PC-3 (cell line): ENCODE measurements at regions of chr17 and their contacts with region 1.

Region 1: DNA sequence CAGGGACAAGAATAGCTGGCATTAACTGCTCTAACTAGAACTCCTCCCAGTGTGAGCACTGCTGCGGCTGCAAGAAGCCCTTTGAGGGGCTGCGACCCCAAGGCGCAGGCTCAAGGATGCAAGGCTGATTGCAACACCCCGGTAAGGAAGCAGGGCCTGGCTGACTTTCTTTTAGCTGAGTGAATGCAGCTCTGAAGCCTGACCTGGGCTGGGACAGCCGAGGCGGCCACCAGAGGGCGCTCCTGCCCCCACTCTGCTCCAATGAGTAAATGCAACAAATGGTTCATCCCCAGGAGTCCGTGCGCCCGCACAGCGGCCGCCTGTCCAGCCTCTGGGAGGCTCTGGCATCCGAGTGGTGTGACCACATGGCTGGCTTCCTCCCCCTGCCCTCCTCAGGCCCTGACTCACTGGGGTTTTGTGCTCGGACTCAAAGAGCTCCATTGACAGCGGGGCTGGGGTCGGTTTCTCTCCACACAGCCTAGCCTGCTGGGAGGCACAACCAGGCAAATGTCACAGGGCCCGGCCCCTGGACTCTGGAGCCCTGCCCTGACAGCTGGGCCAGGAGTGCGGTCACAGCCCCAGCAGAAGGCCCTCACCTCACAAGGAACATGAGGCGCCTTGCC is at the start of gene SMIM5:
- DNase-seq: peak; percentile 92
- ATAC-seq: peak; percentile 85
- H3K4me3 ChIP-seq: no peak within 1 kb of the TSS
- H3K27ac ChIP-seq: peak within 1 kb of the TSS; percentile 89
- H3K4me1 ChIP-seq: peaks cover 16% of the 10 kb centered on the region
- H3K27me3 ChIP-seq: no peaks in the 10 kb centered on the region
- CTCF ChIP-seq: peak; percentile 98
- total RNA-seq, gene SMIM5: 2.3 and 4.3 TPM in 2 replicates

Region 2: GRCh38 chr17:75487351-75488070 is 145.5 kb before region 1 on chr17:
- CTCF ChIA-PET with region 1: no interaction called
- POLR2A ChIA-PET with region 1: no interaction called
- intact Hi-C with region 1: no loop called
- DNase-seq: no peak
- ATAC-seq: no peak
- H3K4me3 ChIP-seq: no peak overlapping the region
- H3K27ac ChIP-seq: no peak overlapping the region
- H3K4me1 ChIP-seq: no peaks in the 10 kb centered on the region
- H3K27me3 ChIP-seq: no peaks in the 10 kb centered on the region
- CTCF ChIP-seq: no peak; the same call in 1 of the 2 replicates

Region 3: GRCh38 chr17:75589012-75589918 is 43.7 kb before region 1 on chr17:
- CTCF ChIA-PET with region 1: interaction called, 5 read pairs
- POLR2A ChIA-PET with region 1: interaction called, 5 read pairs
- intact Hi-C with region 1: loop called (anchors 1 kb)
- DNase-seq: peak; percentile 94
- ATAC-seq: peak; percentile 94
- H3K4me3 ChIP-seq: peak overlapping the region; percentile 65
- H3K27ac ChIP-seq: no peak overlapping the region
- H3K4me1 ChIP-seq: peaks cover 10% of the 10 kb centered on the region
- H3K27me3 ChIP-seq: no peaks in the 10 kb centered on the region
- CTCF ChIP-seq: peak; percentile 69

Region 4: GRCh38 chr17:75645889-75646637 is 13.1 kb after region 1 on chr17:
- CTCF ChIA-PET with region 1: interaction called, 83 read pairs
- POLR2A ChIA-PET with region 1: interaction called, 6 read pairs
- intact Hi-C with region 1: no loop called
- DNase-seq: peak; percentile 95
- ATAC-seq: peak; percentile 89
- H3K4me3 ChIP-seq: peak overlapping the region; percentile 6; the same call in 1 of the 2 replicates
- H3K27ac ChIP-seq: peak overlapping the region; percentile 94
- H3K4me1 ChIP-seq: peaks cover 45% of the 10 kb centered on the region
- H3K27me3 ChIP-seq: no peaks in the 10 kb centered on the region
- CTCF ChIP-seq: no peak

Region 5: DNA sequence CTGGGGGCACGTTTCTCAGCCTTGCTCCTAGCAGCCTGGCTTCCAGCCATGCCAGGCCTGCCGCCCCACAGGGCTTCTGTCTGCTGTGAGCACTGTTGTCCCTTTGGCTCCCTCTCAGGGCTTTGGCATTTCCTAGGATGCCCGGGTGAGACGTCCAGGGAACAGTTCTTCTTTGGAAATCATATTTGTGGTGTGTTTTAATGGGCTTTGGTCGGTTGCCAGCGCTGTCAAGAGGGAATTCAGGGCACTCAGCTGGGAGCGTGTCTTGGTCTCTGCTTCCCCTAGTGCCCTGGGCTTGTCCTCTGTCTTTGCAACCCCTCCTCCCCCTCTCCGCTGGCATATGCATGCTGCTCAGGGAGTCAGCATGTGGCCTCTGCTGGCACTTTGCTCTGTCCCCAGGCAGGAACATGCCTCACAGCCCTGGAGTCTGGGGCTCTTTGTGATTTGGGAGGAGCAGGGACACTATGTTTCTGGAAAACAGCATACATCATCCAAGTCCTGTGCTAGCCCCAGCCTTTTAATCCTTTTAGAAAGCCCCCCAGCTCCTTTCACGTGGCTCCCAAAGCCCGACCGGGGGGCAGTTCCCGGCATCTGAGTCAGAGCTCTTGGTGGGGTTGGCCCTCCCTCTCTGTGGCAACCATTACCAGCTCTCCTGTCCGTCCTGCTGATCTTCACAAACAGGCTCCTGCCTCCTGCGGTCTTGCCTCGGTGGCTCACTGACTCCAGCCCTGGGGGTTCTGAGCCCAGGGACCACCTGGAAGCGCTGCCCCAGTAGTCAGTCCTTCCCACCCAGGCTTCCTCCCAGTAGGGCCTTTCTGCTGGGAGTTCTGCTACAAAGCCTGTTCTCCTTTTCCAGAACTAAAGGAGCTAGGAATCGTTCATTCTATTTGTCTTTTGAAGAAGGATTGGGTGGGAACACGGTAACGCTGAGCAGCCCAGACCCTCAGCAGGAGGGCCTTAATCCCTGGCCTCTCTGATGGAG is 60.8 kb after region 1 on chr17:
- CTCF ChIA-PET with region 1: interaction called, 14 read pairs
- POLR2A ChIA-PET with region 1: interaction called, 5 read pairs
- intact Hi-C with region 1: no loop called
- DNase-seq: peak; percentile 99
- ATAC-seq: peak; percentile 77
- H3K4me3 ChIP-seq: no peak overlapping the region
- H3K27ac ChIP-seq: peak overlapping the region; percentile 86
- H3K4me1 ChIP-seq: peaks cover 88% of the 10 kb centered on the region
- H3K27me3 ChIP-seq: no peaks in the 10 kb centered on the region
- CTCF ChIP-seq: peak; percentile 38; the same call in 1 of the 2 replicates